OCI-LY7 (cell line): ENCODE measurements at regions of chr11 and their contacts with region 1.

Region 1: DNA sequence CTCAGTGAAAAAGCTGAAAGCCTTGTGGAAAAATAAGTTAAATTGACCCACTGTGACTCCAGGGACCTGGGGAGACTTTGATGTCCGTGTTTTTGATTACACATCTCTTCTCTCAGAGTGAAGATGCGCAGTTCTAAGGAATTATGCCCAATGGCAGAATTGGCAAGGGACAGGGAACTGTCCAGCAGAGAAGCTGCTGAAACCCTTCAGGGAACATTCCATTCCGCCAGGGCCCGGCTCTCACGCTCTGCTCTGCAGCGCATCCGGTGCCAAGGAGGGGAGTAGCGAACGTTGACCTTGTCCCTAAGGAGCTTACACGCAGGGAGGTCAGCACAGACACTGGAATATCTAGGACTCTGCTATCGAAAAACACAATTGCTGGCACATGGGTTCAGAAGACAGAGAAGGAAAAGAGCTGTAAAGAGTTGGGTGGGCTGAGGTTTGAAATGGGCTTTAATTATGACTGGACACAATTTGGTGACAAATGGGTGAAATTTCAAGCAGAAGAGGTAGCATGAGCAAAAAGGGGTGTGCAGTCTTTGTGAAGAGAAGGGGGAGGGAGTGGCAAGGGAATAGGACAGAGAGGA is 64.5 kb upstream of the B3GAT1 start:
- DNase-seq: no peak
- H3K4me3 ChIP-seq: no peak overlapping the region
- H3K27ac ChIP-seq: no peak overlapping the region
- H3K4me1 ChIP-seq: no peaks in the 10 kb centered on the region
- CTCF ChIP-seq: no peak

Region 2: DNA sequence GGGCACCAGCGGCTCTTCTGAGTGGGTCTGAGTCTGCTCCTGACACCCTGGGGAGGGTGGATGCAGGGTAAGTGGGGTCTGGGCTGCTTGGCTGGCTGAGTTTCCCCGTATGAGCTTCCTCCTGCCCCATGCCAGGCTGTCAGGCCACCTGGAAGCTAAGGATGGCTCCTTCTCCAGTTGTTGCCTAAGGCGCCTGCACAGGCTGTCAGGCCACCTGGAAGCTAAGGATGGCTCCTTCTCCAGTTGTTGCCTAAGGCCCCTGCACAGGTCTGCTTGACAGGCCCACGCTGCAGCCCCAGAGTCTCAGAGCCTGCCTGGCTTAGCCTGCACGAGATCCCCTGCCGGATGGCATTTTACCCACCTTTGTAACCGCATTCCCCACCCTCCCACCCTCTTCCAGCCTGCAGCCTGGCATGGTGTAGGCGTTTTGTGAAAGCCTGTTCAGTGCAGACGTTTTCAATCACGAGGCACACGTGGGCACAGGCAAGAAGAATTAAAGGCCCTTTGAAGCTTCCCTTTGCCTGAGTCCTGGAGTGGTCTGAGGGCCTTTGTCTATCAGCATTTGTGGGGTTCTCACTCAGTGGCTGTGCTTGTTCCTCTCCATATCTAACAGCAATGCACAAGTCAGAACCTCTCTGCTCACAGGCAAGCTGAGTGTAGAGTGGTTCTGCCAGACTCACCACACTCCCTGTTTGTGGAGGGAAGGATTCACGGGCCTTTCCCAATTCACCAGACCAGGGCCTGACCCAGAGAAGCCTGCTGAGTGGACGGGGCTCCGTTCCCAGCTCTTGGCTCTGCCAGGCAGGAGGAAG is 24.3 kb before region 1 on chr11:
- CTCF ChIA-PET with region 1: no interaction called
- POLR2A ChIA-PET with region 1: no interaction called
- intact Hi-C with region 1: loop called (anchors 2 kb)
- DNase-seq: no peak
- H3K4me3 ChIP-seq: no peak overlapping the region
- H3K27ac ChIP-seq: no peak overlapping the region
- H3K4me1 ChIP-seq: no peaks in the 10 kb centered on the region
- CTCF ChIP-seq: no peak

Region 3: DNA sequence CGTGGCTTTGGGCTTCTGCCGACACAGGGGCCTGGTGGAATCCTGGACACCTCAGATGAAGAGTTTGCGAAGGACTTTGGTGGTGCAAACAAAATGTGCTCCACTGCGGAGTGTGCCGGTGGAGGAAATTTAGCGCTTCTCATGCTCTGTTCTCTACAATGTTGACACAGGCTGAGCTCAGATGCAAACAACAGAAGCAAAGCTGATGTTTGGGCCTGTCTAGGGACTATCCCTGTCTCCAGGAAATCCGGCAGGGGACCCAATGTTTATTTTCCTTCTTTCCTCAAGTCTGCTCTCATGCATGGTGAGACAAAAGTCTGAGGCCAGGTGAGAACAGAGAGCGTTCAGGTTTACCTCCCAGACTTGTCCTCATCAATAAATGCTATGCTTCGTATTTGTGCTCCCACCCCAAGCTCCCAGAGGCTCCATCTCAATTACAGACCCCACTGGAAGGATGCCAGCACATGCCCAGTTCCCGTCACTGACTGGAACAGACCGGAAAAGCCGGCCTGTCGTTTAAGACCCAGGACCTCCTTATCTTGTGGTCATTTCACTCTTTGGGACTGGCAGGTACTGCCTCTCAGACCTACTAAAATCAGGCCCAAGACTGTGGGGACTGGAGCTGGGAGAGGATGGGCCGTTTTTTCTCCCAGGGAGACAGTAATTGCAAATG is 41.2 kb after region 1 on chr11:
- CTCF ChIA-PET with region 1: no interaction called
- POLR2A ChIA-PET with region 1: no interaction called
- intact Hi-C with region 1: no loop called
- DNase-seq: no peak
- H3K4me3 ChIP-seq: no peak overlapping the region
- H3K27ac ChIP-seq: no peak overlapping the region
- H3K4me1 ChIP-seq: no peaks in the 10 kb centered on the region
- CTCF ChIP-seq: no peak

Region 4: GRCh38 chr11:134679592-134679991 is 203.1 kb after region 1 on chr11:
- CTCF ChIA-PET with region 1: no interaction called
- POLR2A ChIA-PET with region 1: no interaction called
- intact Hi-C with region 1: no loop called
- DNase-seq: no peak
- H3K4me3 ChIP-seq: no peak overlapping the region
- H3K27ac ChIP-seq: no peak overlapping the region
- H3K4me1 ChIP-seq: no peaks in the 10 kb centered on the region
- CTCF ChIP-seq: no peak